Left ventricle myocardium inferior (tissue), 1 donor: ENCODE measurements at regions of chr1 and their contacts with region 1.

Region 1: DNA sequence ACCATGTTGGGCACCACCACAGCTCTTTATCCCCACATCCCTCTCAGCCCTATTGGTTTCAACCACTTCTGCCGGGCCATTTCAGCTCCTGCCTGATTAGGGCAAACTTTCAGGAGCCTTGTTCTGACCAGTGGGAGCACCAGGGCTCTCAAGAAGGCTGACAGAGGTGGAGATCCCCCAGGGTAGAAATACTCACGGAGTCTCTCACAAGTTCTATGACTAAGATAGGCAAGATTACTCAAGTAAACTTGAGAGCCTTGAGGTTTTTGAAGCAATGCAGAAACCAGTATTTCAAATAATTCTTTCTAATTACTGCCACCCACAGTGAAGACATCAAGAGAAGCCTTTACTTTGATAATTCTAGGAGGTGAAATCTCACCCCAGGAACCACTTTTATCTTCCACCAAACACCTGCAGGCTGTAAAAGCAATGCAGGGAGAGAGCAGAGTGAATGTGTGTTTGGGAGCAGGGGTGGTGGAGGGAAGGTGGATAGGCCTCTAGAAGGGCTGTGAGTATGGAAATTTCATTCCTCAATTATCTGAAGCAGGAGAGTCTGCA is 6.6 kb upstream of the PTCH2 start:
- DNase-seq: no peak
- H3K4me3 ChIP-seq: no peak overlapping the region
- H3K27ac ChIP-seq: peak overlapping the region; percentile 36
- H3K4me1 ChIP-seq: peaks cover 14% of the 10 kb centered on the region
- H3K27me3 ChIP-seq: no peaks in the 10 kb centered on the region
- CTCF ChIP-seq: no peak

Region 2: DNA sequence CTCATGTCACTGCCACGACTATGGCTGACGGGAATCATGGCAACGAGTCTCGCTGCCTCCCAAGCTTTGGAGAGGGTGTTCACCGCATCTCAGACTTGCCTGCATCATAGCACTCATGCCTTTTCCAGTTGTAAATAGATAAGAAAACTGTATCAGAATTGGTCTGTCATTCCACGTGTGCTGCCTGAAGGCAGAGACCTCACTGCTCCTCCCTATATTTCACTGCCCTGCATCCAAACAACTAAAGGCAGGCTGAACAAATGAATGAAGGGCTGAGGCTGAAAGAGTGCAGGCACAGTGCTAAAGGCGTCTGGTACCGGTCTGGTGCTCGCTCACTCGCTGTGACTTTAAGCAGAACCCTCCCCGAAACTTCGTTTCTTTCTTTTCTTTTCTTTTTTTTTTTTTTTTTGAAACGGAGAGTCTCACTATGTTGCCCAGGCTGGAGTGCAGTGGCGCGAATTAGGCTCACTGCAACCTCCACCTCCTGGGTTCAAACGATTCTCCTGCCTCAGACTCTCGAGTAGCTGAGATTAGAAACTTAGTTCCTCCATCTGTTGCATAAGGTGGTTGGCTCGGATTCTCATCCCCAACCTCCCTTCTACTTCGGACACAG is 136.2 kb after region 1 on chr1:
- intact Hi-C with region 1: loop called (anchors 10 kb)
- DNase-seq: no peak
- H3K4me3 ChIP-seq: peak overlapping the region; percentile 82
- H3K27ac ChIP-seq: peak overlapping the region; percentile 88
- H3K4me1 ChIP-seq: peaks cover 39% of the 10 kb centered on the region
- H3K27me3 ChIP-seq: no peaks in the 10 kb centered on the region
- CTCF ChIP-seq: no peak